A673 (cell line): ENCODE measurements at regions of chr5 and their contacts with region 1.

Region 1: GRCh38 chr5:95931079-95931833 is 30.4 kb downstream of the ELL2 start:
- DNase-seq: no peak
- H3K4me3 ChIP-seq: no peak overlapping the region
- H3K27ac ChIP-seq: no peak overlapping the region
- H3K4me1 ChIP-seq: peaks cover 5% of the 10 kb centered on the region
- H3K27me3 ChIP-seq: no peaks in the 10 kb centered on the region
- CTCF ChIP-seq: no peak

Region 2: GRCh38 chr5:95486191-95486590 is 445.1 kb before region 1 on chr5:
- CTCF ChIA-PET with region 1: no interaction called
- POLR2A ChIA-PET with region 1: interaction called, 10 read pairs
- intact Hi-C with region 1: no loop called
- DNase-seq: no peak
- H3K4me3 ChIP-seq: no peak overlapping the region
- H3K27ac ChIP-seq: no peak overlapping the region
- H3K4me1 ChIP-seq: no peaks in the 10 kb centered on the region
- H3K27me3 ChIP-seq: no peaks in the 10 kb centered on the region
- CTCF ChIP-seq: no peak

Region 3: GRCh38 chr5:95846554-95847260 is 84.5 kb before region 1 on chr5:
- CTCF ChIA-PET with region 1: no interaction called
- POLR2A ChIA-PET with region 1: no interaction called
- intact Hi-C with region 1: no loop called
- DNase-seq: peak; percentile 78
- H3K4me3 ChIP-seq: no peak overlapping the region
- H3K27ac ChIP-seq: no peak overlapping the region
- H3K4me1 ChIP-seq: no peaks in the 10 kb centered on the region
- H3K27me3 ChIP-seq: no peaks in the 10 kb centered on the region
- CTCF ChIP-seq: peak; percentile 92